ENCODE measurements at regions of chr10 and their contacts with region 1.

Region 1: GRCh38 chr10:88091490-88092105 is 228.2 kb downstream of the PTEN start:
- DNase-seq: peak; percentile 85
- H3K4me3 Mint-ChIP-seq: no peak overlapping the region
- H3K27ac Mint-ChIP-seq: peak overlapping the region; percentile 85
- H3K4me1 Mint-ChIP-seq: peaks cover 38% of the 10 kb centered on the region
- H3K27me3 Mint-ChIP-seq: peaks cover 28% of the 10 kb centered on the region

Region 2: DNA sequence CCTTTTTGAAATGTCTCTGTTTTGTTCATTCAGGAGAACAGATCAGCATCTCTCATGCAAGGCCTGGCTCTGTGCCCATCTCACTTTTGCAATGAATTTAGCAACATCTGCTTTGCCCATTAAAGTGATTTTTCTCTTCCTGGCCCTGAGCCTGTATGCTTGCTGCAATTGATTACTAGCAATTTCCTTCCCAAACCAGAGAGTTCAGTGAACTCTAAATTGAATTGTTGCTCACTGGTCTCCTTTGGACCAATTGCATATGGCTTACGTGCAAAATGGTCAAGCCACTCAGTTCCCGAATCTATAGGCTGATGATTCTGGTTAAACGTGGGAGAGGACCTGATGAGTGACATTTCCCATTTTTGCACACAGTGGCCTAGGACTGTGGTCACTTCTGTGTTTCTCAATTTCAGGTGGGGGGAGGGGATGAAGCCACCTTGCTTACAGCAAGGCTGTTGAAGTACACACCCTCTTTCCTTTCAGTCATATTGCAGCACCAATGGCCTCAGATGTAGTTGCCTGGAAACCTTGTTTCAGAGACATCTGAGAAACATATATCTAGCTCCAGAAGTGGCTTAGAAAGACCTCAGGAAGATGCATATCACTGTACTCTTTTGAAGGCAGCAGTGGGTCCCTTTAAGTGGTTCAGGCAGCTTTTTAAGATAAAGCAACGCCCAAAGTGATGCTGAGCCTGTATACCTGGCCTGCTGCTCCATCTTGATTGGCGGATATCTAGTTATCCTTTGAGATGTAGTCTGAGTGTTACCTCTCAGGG is 26.8 kb before region 1 on chr10:
- CTCF ChIA-PET with region 1: no interaction called
- POLR2A ChIA-PET with region 1: interaction called, 16 read pairs
- DNase-seq: no peak
- H3K4me3 Mint-ChIP-seq: no peak overlapping the region
- H3K27ac Mint-ChIP-seq: peak overlapping the region; percentile 31
- H3K4me1 Mint-ChIP-seq: peaks cover 56% of the 10 kb centered on the region
- H3K27me3 Mint-ChIP-seq: no peaks in the 10 kb centered on the region

Region 3: DNA sequence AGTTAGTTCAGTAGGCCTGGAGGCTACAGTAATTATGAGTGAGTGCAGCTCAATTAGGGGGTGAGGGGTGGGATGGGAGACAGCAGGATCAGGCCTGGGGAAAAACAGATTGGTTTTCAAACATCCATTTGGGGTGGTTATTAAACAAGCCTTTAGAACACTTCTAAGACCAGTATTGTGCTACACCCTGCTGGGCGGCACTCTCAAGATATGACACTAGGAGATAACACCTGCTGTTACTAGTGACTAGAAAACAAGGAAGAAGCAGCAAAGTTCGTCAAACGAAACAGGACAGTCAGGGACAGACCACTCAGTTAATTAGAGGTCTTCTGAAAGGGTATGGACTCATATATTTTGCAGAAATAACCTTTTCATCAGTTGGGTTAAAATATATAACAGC is 125.4 kb after region 1 on chr10:
- CTCF ChIA-PET with region 1: no interaction called
- POLR2A ChIA-PET with region 1: no interaction called
- DNase-seq: no peak
- H3K4me3 Mint-ChIP-seq: no peak overlapping the region
- H3K27ac Mint-ChIP-seq: no peak overlapping the region
- H3K4me1 Mint-ChIP-seq: no peaks in the 10 kb centered on the region
- H3K27me3 Mint-ChIP-seq: no peaks in the 10 kb centered on the region

Region 4: GRCh38 chr10:88386821-88387773 is 295.5 kb after region 1 on chr10:
- CTCF ChIA-PET with region 1: interaction called, 9 read pairs
- POLR2A ChIA-PET with region 1: interaction called, 16 read pairs
- DNase-seq: no peak
- H3K4me3 Mint-ChIP-seq: no peak overlapping the region
- H3K27ac Mint-ChIP-seq: no peak overlapping the region
- H3K4me1 Mint-ChIP-seq: peaks cover 27% of the 10 kb centered on the region
- H3K27me3 Mint-ChIP-seq: no peaks in the 10 kb centered on the region